Adrenal gland (tissue), 19 donors: ENCODE measurements at regions of chr2 and their contacts with region 1.

Region 1: DNA sequence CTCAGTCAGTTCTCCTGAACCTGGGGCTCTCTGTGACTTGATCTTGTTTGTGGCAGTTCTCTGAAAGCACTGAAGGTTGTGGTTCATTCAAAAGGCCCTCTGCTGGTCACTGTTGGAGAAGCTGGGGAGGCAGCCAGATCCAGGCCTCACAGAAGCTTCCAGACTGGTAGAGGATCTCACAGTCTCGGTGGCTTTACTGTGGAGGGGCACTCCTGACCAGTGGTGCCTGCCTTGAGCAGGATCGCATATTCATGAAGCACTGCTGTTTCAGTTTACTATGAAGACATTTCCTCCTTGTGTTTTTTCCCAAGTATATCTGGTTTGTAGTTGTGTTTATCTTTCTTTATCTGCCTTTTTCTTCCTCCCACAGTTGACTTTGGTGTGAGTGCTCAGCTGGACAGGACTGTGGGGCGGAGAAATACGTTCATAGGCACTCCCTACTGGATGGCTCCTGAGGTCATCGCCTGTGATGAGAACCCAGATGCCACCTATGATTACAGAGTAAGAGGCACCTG is 133.9 kb downstream of the MAP4K4 start:
- DNase-seq: peak; percentile 64 to 91 (median 71)
- H3K4me3 ChIP-seq: no peak overlapping the region
- H3K27ac ChIP-seq: peak overlapping the region in 1 of 5 donors; percentile 24
- H3K4me1 ChIP-seq: no peaks in the 10 kb centered on the region
- H3K27me3 ChIP-seq: no peaks in the 10 kb centered on the region
- CTCF ChIP-seq: peak; percentile 49 to 81 (median 70)
- POLR2A ChIP-seq: no peak

Region 2: GRCh38 chr2:101341901-101342624 is 489.3 kb before region 1 on chr2:
- intact Hi-C with region 1: loop called in 1 of 2 experiments (anchors 10 kb)
- DNase-seq: peak; percentile 55 to 88 (median 74)
- H3K4me3 ChIP-seq: no peak overlapping the region
- H3K27ac ChIP-seq: no peak overlapping the region
- H3K4me1 ChIP-seq: no peaks in the 10 kb centered on the region
- H3K27me3 ChIP-seq: no peaks in the 10 kb centered on the region
- CTCF ChIP-seq: peak; percentile 61 to 82 (median 70)
- POLR2A ChIP-seq: no peak

Region 3: DNA sequence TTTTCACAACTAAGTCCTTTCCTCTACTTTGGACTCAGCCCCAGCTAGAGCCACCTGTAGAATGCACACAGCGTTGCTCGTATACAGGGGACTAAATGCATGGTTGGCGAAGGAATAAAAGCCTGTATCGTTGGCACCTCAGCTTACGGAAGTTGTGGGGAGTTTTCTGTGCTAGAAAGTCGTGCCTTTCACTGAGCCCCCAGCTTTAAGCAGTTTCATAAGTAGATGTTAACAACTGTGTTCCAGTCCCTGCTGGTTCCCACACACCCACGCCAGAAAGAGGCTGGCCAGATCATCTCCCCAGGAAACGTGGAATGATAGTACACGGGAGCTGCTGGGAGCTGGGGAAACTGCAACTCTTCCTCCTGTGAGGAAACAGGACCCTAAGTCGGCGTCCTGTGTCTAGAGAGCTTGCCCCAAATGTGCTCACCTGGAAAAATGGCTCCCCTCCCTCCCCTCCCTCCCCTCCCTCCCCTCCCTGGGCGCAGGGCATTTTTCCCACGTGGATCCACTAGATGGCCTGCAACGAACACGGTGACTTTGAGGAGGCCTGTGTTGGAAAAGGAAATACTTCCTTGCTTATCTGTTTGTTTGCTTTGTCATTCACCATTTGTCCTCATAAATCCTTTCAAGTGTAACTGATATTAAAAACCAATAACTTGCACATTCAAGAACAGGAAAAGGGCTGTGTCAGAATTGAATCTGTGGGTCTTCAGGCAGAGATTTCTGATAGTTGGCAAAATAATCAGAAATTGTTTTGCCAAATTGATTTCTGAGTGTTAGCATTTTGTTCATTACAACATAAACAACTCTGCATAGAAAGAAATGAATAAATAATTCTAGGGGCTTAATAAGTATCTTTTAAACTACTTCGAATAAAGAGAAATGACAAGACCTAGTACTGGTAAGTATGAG is 312.6 kb before region 1 on chr2:
- intact Hi-C with region 1: loop called in 1 of 2 experiments (anchors 5 kb)
- DNase-seq: peak; percentile 33 to 70 (median 50)
- H3K4me3 ChIP-seq: no peak overlapping the region
- H3K27ac ChIP-seq: peak overlapping the region in 1 of 5 donors; percentile 51
- H3K4me1 ChIP-seq: peaks cover 0 to 23% of the 10 kb centered on the region in 2 donors
- H3K27me3 ChIP-seq: peaks cover 2% of the 10 kb centered on the region
- CTCF ChIP-seq: peak; percentile 13 to 38 (median 32)
- POLR2A ChIP-seq: no peak

Region 4: DNA sequence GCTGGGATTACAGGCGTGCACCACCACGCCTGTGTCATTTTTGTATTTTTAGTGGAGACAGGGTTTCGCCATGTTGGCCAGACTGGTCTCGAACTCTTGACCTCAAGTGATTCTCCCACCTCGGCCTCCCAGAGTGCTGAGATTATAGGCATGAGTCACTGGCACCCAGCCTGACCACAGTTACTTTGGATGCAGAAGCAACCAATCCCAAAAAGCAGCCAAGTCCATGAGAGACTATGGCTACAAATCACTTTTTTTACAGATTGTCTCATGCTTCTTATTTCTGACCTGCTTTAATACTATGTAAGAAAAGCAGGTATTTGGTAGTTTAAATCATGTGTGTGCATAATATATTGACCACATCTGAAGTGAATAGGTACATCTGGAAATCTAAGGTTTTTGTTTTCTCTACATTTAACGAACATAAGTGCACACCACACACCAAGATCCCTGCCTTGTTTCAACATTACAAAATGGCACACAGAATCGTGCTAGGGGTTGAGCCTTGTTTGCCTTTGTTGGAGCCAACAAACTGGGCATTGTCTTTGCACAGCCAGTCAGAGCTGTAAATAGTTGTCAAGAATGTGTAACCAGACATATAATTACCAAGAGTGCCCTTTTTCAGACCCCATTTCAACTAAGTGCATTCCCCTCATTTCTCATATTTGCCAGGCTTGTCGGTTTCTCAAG is 152.2 kb before region 1 on chr2:
- intact Hi-C with region 1: no loop called
- DNase-seq: no peak
- H3K4me3 ChIP-seq: no peak overlapping the region
- H3K27ac ChIP-seq: no peak overlapping the region
- H3K4me1 ChIP-seq: no peaks in the 10 kb centered on the region
- H3K27me3 ChIP-seq: no peaks in the 10 kb centered on the region
- CTCF ChIP-seq: no peak
- POLR2A ChIP-seq: no peak